ENCODE measurements at regions of chr14 and their contacts with region 1.

Region 1: GRCh38 chr14:71138448-71139293 is 231.4 kb downstream of the PCNX1 start:
- DNase-seq: peak; percentile 69
- H3K4me3 ChIP-seq: no peak overlapping the region
- H3K27ac ChIP-seq: no peak overlapping the region
- H3K4me1 ChIP-seq: peaks cover 25% of the 10 kb centered on the region
- H3K27me3 ChIP-seq: no peaks in the 10 kb centered on the region

Region 2: DNA sequence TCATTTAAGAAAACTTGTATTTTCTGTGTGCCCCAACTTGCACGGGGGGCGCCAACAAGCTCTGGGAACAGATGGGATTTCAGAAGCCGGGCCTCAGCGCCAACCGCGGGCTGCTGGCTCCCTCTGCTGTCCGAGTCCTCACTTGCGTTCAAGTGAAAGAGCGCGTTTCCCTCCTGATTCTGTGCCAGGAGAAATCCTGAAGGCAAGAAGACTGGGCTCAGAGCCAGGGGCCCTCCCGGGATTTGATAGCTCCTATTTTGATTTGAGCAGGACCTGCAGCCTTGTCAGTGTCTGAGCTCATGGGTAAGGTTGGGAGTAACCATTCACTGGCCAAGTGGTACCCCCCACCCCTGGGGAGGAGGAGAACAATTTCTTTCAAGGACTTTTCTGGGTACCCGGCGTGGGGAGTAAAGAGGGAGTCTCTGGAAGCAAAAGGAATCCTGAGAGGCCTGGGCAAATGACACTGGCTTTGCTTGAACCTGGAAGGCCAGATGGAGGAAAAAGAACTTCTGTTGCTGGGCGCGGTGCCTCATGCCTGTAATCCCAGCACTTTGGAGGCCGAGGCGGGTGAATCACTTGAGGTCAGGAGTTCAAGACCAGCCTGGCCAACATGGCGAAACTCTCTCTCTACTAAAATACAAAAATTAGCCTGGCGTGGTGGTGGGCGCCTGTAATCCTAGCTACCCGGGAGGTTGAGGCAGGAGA is 614.6 kb after region 1 on chr14:
- in situ Hi-C with region 1: loop called (anchors 25 kb)
- DNase-seq: peak; percentile 91
- H3K4me3 ChIP-seq: peak overlapping the region; percentile 60
- H3K27ac ChIP-seq: no peak overlapping the region
- H3K4me1 ChIP-seq: peaks cover 4% of the 10 kb centered on the region; the same call in 1 of the 2 replicates
- H3K27me3 ChIP-seq: no peaks in the 10 kb centered on the region

Measured in GM23248 (cell line).